PC-9 (cell line): ENCODE measurements at regions of chrX and their contacts with region 1.

Region 1: DNA sequence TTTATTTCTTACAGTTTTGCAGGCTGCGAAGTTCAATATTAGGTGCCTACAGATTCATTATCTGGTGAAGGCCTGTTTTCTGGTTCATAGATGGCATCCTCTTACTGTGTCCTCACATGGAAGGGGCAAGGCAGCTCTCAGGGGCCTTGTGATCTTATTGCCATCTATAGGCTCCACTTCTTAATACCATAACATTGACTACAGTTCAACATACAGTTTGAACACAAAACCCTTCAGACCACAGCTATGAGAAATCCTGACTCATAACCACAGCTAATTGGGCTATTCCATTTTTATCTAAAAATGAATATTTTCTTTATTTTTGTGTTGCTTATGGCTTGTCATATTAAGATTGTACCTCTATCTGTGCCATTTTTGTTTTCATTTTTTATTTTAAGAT is 72.3 kb downstream of the STAG2 start:
- DNase-seq: no peak
- H3K4me3 ChIP-seq: no peak overlapping the region
- H3K27ac ChIP-seq: no peak overlapping the region
- H3K4me1 ChIP-seq: no peaks in the 10 kb centered on the region
- H3K27me3 ChIP-seq: no peaks in the 10 kb centered on the region
- CTCF ChIP-seq: no peak

Region 2: GRCh38 chrX:123920105-123920785 is 113.6 kb before region 1 on chrX:
- CTCF ChIA-PET with region 1: no interaction called
- POLR2A ChIA-PET with region 1: no interaction called
- intact Hi-C with region 1: no loop called
- DNase-seq: peak in 1 of 2 experiments; percentile 81
- H3K4me3 ChIP-seq: no peak overlapping the region
- H3K27ac ChIP-seq: no peak overlapping the region
- H3K4me1 ChIP-seq: peaks cover 38% of the 10 kb centered on the region
- H3K27me3 ChIP-seq: no peaks in the 10 kb centered on the region
- CTCF ChIP-seq: no peak

Region 3: GRCh38 chrX:123976706-123977316 is 57.0 kb before region 1 on chrX:
- CTCF ChIA-PET with region 1: interaction called, 21 read pairs
- POLR2A ChIA-PET with region 1: no interaction called
- intact Hi-C with region 1: no loop called
- DNase-seq: peak in 1 of 2 experiments; percentile 67
- H3K4me3 ChIP-seq: no peak overlapping the region
- H3K27ac ChIP-seq: no peak overlapping the region
- H3K4me1 ChIP-seq: no peaks in the 10 kb centered on the region
- H3K27me3 ChIP-seq: no peaks in the 10 kb centered on the region
- CTCF ChIP-seq: peak; percentile 73